Right ventricle myocardium superior (tissue), 1 donor: ENCODE measurements at regions of chr3 and their contacts with region 1.

Region 1: DNA sequence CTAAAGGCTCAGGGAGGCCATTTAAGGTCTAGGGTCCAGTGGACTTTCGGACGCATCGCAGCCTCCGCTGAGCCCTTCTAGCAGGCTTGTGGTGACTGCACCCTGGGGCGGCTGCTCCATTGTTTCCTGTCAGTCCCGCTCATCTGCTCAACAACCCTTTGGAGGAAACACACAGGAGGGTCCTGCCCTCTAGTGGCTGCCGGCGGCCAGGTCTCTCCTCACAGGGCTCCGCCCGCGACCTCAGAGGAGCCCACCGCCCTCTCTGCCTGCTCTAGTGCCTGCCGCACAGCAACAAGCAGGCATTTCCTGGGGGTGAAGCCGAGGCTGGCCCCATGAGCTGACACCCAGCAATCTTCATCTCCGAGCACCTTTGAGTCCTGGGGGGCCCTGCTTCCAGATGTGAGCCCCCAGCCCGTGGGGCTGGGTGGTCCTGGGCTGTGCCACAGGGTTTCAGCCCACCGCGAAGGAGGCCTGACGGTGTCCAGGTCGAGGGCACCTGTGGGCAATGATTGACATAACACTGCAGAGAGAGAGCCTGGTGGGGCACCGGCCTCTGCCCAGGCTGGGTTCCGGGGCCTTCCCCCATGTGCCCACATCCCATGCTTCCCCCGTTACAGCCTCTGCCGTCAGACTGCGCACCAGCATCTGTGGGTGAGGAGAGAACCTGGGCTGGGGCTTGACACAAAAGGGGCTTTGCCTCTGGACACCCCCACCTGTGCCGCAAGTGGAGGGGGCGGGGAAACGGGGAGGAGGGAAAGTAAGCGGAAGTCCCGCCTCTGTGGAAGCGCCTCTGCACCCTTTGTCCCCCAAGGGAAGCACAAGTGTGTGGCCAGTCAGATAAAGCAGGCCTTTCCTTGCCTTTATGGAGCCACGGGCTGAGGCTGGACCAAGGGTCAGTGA is 27.0 kb upstream of the SFMBT1 start:
- DNase-seq: peak; percentile 93
- ATAC-seq: peak; percentile 97

Region 2: DNA sequence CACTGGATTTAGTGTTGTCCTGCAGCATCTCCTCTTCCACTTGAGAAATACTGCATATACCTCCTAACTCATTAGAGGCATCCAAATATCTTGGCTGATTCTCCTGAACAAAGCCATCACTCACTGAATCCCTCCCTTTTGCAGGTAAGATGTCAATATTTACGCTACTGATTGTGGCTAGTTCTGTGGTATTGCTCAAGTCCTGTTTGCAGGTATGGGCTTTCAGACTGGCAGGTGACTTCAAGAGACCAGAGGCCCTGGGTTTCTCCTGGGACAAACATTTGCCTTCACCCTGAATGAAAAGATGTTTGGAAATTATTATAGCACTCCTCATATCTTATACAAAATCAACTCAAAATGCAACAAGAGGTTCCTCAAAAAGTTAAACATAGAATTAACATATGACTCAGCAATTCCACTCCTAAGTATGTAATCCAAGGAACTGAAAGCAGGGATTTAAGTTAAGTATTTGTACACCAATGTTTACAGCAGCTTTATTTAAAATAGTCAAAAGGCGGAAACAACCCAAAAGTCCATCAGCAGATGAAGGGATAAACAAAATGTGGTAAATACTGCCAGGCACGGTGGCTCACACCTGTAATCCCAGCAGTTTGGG is 320.8 kb before region 1 on chr3:
- intact Hi-C with region 1: loop called (anchors 10 kb)
- DNase-seq: no peak
- ATAC-seq: no peak

Region 3: GRCh38 chr3:52934630-52935530 is 138.0 kb before region 1 on chr3:
- intact Hi-C with region 1: loop called (anchors 10 kb)
- DNase-seq: no peak
- ATAC-seq: peak; percentile 85

Region 4: DNA sequence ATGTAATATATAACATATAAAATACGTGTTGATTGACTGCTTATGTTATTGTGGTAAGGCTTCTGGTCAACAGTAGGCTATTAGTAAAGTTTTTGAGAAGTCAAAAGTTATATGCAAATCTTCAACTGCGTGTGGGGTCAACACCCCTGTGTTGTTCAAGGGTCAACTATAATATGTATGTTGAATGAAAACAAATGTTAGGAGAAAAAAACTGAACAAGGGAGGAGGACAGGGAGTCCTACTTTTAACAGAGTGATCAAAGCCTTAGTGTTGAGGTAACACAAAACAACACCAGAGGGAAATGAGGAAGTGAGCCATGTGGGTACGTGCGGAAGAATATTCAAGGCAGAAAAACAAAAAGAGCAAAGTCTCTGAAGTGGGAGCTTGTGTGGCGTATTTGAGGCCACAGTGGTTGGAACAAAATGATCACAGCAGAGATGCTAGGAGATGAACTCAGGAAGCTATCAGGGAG is 89.5 kb before region 1 on chr3:
- intact Hi-C with region 1: no loop called
- DNase-seq: no peak
- ATAC-seq: peak; percentile 39